ENCODE measurements at regions of chr3 and their contacts with region 1.

Region 1: GRCh38 chr3:73605412-73605811 is 19.3 kb downstream of the PDZRN3 start:
- DNase-seq: no peak
- ATAC-seq: no peak
- H3K4me3 ChIP-seq: no peak overlapping the region
- H3K27ac ChIP-seq: peak overlapping the region in 2 of 12 donors; percentile 2 to 59
- H3K4me1 ChIP-seq: peaks cover 0 to 92% (median 42%) of the 10 kb centered on the region in 12 donors
- H3K27me3 ChIP-seq: no peaks in the 10 kb centered on the region
- CTCF ChIP-seq: no peak
- POLR2A ChIP-seq: no peak

Region 2: DNA sequence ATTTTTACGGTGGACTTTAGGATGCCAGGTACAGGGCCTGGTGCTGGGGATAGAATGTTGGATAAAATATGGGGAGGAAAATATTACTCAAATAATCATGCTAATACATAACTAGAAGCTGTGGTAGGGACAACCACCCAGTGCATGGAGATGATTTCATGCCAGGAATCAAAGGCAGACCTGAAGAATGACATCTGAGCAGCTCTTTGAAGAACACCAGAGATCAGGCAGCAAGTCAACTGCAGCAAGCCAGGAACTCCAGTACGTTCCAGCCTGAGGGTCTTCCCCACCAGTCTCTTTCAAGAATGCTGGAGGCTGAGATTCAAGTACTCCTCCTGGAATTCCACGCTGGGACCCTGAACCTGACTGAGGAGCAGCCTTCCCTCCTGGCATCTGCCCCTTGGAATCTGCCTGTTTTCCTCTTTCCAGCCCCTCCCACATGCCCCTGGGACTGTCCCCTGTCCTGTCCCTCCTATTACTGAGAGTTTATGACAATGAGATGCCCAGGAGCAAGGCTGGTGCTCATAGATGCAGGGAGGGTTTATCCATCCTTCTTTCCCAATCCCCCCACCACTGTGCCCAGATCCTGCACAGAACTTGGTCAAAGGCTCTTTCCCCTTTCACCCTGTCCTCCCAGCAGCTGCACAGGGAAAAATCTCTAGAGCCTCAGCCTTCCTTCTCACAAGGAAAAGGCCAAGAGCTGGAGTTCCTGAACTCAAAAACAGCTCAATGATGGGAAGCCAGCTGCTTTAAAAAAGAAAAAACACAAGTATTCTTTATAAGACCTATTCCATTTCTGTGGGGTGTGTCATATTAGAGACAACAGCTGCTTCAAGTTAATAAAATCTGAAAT is 48.7 kb before region 1 on chr3:
- intact Hi-C with region 1: no loop called
- DNase-seq: no peak
- ATAC-seq: peak; percentile 10 to 50 (median 42)
- H3K4me3 ChIP-seq: no peak overlapping the region
- H3K27ac ChIP-seq: peak overlapping the region; percentile 26 to 74 (median 60)
- H3K4me1 ChIP-seq: peaks cover 0 to 79% (median 48%) of the 10 kb centered on the region in 12 donors
- H3K27me3 ChIP-seq: no peaks in the 10 kb centered on the region
- CTCF ChIP-seq: no peak
- POLR2A ChIP-seq: no peak

Region 3: DNA sequence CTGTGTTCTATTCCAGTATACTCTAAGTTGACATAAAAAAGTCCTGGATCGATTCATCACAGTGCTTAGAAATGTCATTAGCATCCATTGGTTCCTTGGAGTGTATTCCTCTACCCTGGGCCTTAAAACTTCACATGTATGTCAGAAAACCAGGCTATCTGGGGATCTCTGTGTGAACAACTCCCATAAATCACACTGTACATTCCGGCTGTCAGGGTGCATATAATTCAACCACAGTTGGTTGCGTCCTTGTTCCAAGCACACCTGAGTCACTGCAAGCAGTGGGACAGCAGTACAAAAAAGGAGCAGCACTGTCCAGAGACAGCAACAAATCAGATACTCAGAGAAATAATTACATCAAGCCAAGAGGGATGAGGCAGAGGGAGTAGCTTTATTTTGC is 33.0 kb before region 1 on chr3:
- intact Hi-C with region 1: loop called in 1 of 10 experiments (anchors 5 kb)
- DNase-seq: no peak
- ATAC-seq: no peak
- H3K4me3 ChIP-seq: no peak overlapping the region
- H3K27ac ChIP-seq: peak overlapping the region in 1 of 12 donors; percentile 46
- H3K4me1 ChIP-seq: peaks cover 0 to 79% (median 7%) of the 10 kb centered on the region in 12 donors
- H3K27me3 ChIP-seq: no peaks in the 10 kb centered on the region
- CTCF ChIP-seq: no peak
- POLR2A ChIP-seq: no peak